Naive thymus-derived CD4-positive, alpha-beta T cell (primary cell): ENCODE measurements at regions of chr6 and their contacts with region 1.

Region 1: DNA sequence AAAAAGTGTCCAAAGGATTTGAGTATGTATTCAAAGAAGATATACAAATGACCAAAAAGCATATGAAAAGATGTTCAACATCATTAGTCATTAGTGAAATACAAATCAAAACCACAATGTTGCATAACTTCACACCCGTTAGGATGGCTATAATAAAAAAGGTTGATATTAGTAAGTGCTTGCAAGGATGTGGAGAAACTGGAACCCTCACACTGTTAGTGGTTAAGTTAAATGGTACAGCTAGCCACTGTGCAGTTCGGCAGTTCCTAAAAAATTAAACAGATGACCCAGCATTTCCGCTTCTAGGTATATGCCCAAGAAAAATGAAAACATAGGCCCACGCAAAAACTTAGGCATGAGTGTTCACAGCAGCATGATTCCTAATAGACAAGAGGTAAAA is 38.6 kb downstream of the IBTK start:
- DNase-seq: no peak
- ATAC-seq: no peak
- H3K4me3 ChIP-seq: no peak overlapping the region
- H3K4me3 Mint-ChIP-seq: no peak overlapping the region
- H3K27ac ChIP-seq: no peak overlapping the region
- H3K27ac Mint-ChIP-seq: no peak overlapping the region
- H3K4me1 ChIP-seq: no peaks in the 10 kb centered on the region
- H3K4me1 Mint-ChIP-seq: peaks cover 0 to 18% (median 1%) of the 10 kb centered on the region in 7 donors
- H3K27me3 ChIP-seq: no peaks in the 10 kb centered on the region
- H3K27me3 Mint-ChIP-seq: no peaks in the 10 kb centered on the region

Region 2: DNA sequence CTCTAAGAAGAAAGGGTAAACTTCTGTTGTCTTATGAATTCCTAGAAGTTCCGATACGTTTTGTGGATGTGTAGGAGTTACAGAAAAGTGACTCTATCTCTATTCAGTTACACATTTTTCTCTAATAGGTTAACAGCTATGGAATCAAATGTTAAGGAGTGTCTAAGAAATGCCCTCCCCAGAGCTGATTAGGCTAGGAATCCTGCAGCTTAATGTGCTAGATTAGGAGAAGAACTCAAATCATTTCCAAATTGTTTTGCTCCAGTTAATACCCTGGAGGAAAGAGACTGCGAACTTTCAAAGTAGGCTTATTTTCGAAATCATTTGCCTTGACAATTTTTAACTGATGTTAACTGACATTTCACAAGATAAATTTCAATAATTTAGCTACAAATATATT is 13.3 kb before region 1 on chr6:
- CTCF ChIA-PET with region 1: no interaction called
- POLR2A ChIA-PET with region 1: no interaction called
- intact Hi-C with region 1: loop called in 1 of 2 experiments (anchors 2 kb)
- DNase-seq: no peak
- ATAC-seq: no peak
- H3K4me3 ChIP-seq: no peak overlapping the region
- H3K4me3 Mint-ChIP-seq: no peak overlapping the region
- H3K27ac ChIP-seq: no peak overlapping the region
- H3K27ac Mint-ChIP-seq: no peak overlapping the region
- H3K4me1 ChIP-seq: no peaks in the 10 kb centered on the region
- H3K4me1 Mint-ChIP-seq: no peaks in the 10 kb centered on the region
- H3K27me3 ChIP-seq: no peaks in the 10 kb centered on the region
- H3K27me3 Mint-ChIP-seq: no peaks in the 10 kb centered on the region

Region 3: GRCh38 chr6:82227770-82228169 is 18.9 kb after region 1 on chr6:
- CTCF ChIA-PET with region 1: no interaction called
- POLR2A ChIA-PET with region 1: no interaction called
- intact Hi-C with region 1: no loop called
- DNase-seq: no peak
- ATAC-seq: no peak
- H3K4me3 ChIP-seq: no peak overlapping the region
- H3K4me3 Mint-ChIP-seq: peak overlapping the region in 1 of 10 donors; percentile 37
- H3K27ac ChIP-seq: no peak overlapping the region
- H3K27ac Mint-ChIP-seq: peak overlapping the region in 2 of 9 donors; percentile 75 to 90
- H3K4me1 ChIP-seq: no peaks in the 10 kb centered on the region
- H3K4me1 Mint-ChIP-seq: peaks cover 3 to 17% (median 12%) of the 10 kb centered on the region in 7 donors
- H3K27me3 ChIP-seq: no peaks in the 10 kb centered on the region
- H3K27me3 Mint-ChIP-seq: no peaks in the 10 kb centered on the region